OCI-LY7 (cell line): ENCODE measurements at regions of chr10 and their contacts with region 1.

Region 1: DNA sequence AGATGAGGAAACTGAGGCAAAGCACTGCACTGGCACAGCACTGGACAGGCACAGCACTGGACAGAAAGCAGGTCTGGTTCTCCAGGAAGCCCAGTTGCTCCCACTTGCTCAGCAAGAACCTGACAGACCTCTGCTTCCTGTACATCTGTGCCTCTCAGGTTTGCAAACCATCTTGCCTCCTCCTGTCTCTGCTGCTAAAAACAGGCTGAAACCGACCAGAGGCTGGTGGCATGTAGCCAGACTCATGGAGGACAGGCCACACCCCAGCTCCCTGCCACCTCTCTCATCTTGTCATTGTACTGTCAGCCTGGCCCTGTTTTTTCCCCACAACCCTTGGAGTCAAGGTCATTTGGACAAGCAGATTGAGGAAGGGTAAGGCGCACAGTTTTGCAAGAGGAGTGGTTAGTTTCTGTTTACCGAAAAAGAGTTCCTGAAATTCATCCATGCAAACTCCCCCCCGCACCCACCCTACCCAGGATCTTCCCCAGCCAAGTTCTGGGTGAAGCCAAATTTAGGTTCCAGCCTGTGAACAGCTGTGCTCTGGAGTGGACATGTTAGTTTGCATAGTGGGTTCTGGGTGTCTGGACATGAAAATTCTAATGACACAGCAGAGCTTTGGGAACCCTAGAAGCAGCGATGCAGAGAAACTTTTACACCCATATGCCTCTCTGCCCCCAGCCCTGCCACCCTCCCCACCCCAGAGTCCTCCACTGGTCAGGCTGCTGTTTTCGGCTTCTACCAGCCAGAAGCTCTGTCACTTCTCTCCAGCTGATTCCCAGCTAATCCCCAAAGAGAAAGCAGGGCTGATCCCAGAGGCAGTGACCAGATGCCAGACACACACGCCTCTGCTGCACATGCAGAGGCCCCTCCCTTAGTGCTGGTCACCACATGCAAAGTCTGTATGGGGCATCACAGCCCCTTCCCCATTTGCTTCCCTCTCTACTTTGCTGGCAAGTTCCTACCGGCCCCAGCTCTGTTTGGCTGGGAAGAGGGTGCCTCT is 8.5 kb upstream of the C10orf105 start:
- DNase-seq: peak; percentile 92
- H3K4me3 ChIP-seq: peak overlapping the region; percentile 56
- H3K27ac ChIP-seq: peak overlapping the region; percentile 95
- H3K4me1 ChIP-seq: peaks cover 55% of the 10 kb centered on the region
- CTCF ChIP-seq: no peak

Region 2: DNA sequence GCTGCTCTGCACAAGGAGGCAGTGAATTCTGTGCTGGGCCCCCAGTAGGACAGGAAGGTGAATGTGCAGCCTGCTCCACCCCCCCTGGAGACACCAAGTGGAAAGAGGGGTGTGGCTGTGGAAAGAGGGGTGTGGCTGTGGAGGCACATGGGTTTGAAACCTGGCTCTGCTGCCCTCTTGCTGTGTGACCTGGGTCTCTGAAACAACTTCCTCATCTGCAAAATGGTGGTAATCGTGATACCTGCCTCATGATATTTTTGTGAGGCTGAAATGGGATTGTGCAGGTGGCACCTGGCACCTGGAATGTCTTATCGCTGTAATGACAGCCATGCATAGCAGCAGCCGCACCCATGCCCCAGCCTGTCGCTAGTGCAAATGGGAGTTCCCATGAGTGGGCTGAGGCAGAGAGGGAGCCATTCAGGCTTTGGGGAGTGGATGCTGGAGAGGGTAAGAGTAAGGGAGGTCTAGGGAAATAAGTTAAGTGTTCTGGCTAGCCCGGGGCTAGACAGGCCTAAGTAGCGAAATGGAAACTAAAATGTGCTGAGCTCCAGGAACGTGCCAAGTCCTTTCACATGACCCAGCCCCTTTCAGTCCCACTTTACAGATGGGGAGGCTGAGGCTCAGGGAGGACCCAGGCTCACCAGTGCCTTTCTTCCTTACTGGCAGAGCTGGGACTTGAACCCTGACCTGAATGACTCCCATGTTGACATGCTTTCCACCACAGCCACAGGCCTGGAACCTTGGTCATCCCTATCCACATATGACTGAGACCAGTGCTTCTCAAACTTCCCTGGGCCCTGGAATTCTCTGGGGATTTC is 43.5 kb before region 1 on chr10:
- CTCF ChIA-PET with region 1: no interaction called
- POLR2A ChIA-PET with region 1: no interaction called
- intact Hi-C with region 1: no loop called
- DNase-seq: peak; percentile 76
- H3K4me3 ChIP-seq: no peak overlapping the region
- H3K27ac ChIP-seq: no peak overlapping the region
- H3K4me1 ChIP-seq: peaks cover 10% of the 10 kb centered on the region
- CTCF ChIP-seq: peak; percentile 74

Region 3: GRCh38 chr10:71748671-71749191 is 20.7 kb after region 1 on chr10:
- CTCF ChIA-PET with region 1: interaction called, 5 read pairs
- POLR2A ChIA-PET with region 1: interaction called, 9 read pairs
- intact Hi-C with region 1: loop called (anchors 1 kb)
- DNase-seq: peak; percentile 85
- H3K4me3 ChIP-seq: peak overlapping the region; percentile 25
- H3K27ac ChIP-seq: peak overlapping the region; percentile 88
- H3K4me1 ChIP-seq: peaks cover 75% of the 10 kb centered on the region
- CTCF ChIP-seq: peak; percentile 38; the same call in 1 of the 2 replicates

Region 4: DNA sequence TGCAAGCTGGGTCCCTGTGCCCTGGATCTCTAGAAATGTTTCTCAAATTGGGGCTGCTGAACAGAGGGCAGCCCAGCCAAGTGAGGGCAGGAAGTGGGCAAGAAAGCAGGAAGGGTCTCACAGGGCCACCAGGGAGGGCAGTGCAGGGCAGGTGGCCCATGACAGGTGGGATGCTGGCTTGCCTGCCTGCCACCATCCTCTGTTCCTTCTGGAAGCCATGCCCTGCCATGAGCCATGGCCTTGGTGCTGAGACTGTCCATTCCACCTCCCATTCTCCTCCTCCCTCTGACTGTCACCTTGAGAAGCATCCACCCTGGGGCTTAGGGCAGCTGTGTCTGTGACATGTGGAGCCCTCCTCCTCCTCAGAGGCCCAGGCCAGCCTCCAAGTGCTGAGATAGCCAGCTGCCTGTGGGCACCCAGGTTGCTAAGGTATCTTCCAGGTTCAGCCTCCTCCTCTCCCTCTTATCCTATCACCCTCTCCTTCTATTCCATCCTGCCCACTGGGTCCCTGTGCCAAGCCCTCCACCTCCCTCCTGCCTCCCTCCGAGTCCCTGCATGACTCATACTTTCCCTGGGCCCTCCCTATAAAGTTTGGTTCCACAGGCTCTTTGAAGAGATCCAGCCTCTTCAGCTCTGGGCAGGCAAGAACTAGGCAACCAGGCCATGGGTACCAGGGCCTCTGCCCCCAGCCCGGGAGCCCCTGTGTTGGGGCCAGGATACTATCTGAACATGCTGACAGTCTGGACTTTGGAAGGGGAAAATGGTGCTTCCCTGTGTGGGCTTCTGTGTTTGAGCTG is 44.0 kb after region 1 on chr10:
- CTCF ChIA-PET with region 1: interaction called, 6 read pairs
- POLR2A ChIA-PET with region 1: interaction called, 8 read pairs
- intact Hi-C with region 1: loop called (anchors 1 kb)
- DNase-seq: no peak
- H3K4me3 ChIP-seq: no peak overlapping the region
- H3K27ac ChIP-seq: no peak overlapping the region
- H3K4me1 ChIP-seq: peaks cover 68% of the 10 kb centered on the region
- CTCF ChIP-seq: no peak

Region 5: DNA sequence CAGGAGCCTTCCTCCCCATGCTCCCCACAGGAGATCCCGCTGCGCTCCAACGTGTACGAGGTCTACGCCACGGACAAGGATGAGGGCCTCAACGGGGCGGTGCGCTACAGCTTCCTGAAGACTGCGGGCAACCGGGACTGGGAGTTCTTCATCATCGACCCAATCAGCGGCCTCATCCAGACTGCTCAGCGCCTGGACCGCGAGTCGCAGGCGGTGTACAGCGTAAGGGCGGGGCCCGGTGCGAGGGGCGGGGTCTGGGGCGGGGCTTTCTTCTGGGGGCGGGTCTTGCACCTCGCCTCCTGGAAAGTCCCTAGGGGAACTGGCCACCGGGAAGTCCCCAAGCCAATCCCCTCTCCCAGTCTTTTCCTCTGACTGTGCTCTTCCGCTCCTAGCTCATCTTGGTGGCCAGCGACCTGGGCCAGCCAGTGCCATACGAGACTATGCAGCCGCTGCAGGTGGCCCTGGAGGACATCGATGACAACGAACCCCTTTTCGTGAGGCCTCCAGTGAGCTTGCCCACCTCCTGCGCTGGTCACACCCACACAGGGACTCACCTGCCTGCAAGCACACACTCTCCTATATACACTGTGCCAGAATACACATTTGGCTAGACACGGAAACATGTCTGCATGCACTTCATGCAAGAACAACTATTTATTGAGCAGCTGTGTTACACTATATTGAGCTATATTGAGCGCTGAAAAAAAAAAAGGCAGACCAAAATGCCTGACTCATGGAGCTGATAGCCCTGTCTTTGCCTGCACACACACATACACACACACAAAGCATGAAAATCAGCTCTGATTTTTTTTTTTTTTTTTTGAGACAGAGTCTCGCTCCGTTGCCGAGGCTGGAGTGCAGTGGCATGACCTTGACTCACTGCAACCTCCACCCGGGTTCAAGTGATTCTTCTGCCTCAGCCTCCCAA is 78.0 kb after region 1 on chr10:
- CTCF ChIA-PET with region 1: interaction called, 3 read pairs
- POLR2A ChIA-PET with region 1: no interaction called
- intact Hi-C with region 1: loop called (anchors 2 kb)
- DNase-seq: no peak
- H3K4me3 ChIP-seq: no peak overlapping the region
- H3K27ac ChIP-seq: no peak overlapping the region
- H3K4me1 ChIP-seq: peaks cover 13% of the 10 kb centered on the region
- CTCF ChIP-seq: no peak

Region 6: DNA sequence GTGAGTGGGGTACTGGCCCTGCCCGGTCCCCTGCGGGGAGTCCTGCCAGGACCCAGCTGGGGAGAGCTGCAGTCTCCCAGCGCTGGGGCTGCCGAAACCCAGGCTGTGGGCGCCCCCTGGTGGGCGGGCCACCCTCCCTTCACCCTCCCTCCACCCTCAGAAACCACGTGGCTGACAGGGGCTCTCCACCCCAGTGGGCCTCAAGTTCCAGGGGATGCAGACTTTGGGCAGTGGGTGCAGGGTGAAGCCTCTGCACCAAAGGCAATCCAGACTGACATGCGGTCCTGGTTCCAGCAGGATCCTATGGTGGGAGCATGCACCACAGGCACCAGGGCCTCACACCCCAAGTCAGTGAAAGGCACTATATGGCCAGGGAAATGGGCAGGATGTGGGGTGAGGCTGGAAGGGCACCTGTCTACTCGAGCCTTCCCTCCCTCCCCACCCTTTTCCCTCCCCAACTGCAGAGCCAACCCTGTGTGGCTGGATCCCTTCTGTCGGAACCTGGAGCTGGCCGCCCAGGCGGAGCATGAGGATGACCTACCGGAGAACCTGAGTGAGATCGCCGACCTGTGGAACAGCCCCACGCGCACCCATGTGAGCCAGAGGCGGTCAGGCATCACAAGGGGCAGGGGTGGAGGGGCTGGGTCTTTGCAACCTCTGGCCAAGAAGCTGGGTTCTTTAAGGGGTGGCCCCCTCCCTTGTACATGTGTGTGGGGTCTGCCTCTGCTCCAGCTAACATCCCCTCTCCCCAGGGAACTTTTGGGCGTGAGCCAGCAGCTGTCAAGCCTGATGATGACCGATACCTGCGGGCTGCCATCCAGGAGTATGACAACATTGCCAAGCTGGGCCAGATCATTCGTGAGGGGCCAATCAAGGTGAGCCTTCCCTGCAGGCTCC is 84.2 kb after region 1 on chr10:
- CTCF ChIA-PET with region 1: interaction called, 3 read pairs
- POLR2A ChIA-PET with region 1: no interaction called
- intact Hi-C with region 1: loop called (anchors 1 kb)
- DNase-seq: peak; percentile 80
- H3K4me3 ChIP-seq: no peak overlapping the region
- H3K27ac ChIP-seq: no peak overlapping the region
- H3K4me1 ChIP-seq: peaks cover 6% of the 10 kb centered on the region
- CTCF ChIP-seq: peak; percentile 97

Region 7: GRCh38 chr10:71893920-71894319 is 165.9 kb after region 1 on chr10:
- CTCF ChIA-PET with region 1: no interaction called
- POLR2A ChIA-PET with region 1: no interaction called
- intact Hi-C with region 1: loop called (anchors 10 kb)
- DNase-seq: no peak
- H3K4me3 ChIP-seq: no peak overlapping the region
- H3K27ac ChIP-seq: no peak overlapping the region
- H3K4me1 ChIP-seq: peaks cover 18% of the 10 kb centered on the region
- CTCF ChIP-seq: no peak

Region 8: DNA sequence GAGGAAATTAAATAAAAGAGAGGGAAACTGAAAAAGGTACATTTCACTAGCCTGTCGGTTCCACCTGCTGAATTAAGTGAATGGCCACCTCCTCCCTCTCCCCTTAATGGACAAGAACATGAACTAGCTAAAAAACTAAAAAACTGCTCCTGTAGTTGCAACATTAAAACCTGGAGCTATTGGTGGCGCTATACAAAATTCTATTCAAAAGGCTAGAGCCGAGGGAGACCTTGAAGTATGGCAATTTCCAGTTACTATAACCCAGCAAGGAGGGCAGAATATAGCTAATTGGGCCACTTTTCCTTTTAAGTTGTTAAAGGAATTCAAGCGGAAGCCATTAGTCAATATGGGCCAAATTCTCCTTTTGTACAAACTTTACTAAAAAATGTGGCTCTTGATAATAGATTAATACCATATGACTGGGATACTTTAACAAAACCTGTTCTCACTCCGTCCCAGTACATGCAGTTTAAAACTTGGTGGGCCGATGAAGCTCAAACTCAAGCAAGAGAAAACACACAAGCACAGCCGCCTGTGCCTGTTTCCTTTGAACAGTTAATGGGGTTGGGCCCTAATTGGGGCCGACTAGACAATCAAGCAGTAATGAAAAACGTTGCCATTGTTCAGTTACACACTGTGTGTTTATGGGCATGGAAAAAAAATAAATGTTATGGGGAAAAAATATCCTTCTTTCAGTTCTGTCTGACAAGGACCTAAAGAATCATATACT is 229.7 kb after region 1 on chr10:
- CTCF ChIA-PET with region 1: no interaction called
- POLR2A ChIA-PET with region 1: no interaction called
- intact Hi-C with region 1: no loop called
- DNase-seq: no peak
- H3K4me3 ChIP-seq: no peak overlapping the region
- H3K27ac ChIP-seq: no peak overlapping the region
- H3K4me1 ChIP-seq: no peaks in the 10 kb centered on the region
- CTCF ChIP-seq: peak; percentile 32; the same call in 1 of the 2 replicates